ENCODE measurements at regions of chr15 and their contacts with region 1.

Region 1: GRCh38 chr15:75639709-75640482 is at the start of gene IMP3:
- DNase-seq: peak in 1 of 2 donors; percentile 96
- H3K4me3 ChIP-seq: peak within 1 kb of the TSS; percentile 83 to 94
- H3K27ac ChIP-seq: peak within 1 kb of the TSS; percentile 89
- H3K4me1 ChIP-seq: peaks cover 43% of the 10 kb centered on the region
- H3K27me3 ChIP-seq: no peaks in the 10 kb centered on the region
- CTCF ChIP-seq: no peak
- POLR2A ChIP-seq: peak; percentile 60 to 95
- total RNA-seq, gene IMP3: 109 TPM

Region 2: GRCh38 chr15:75347222-75347878 is 292.5 kb before region 1 on chr15:
- intact Hi-C with region 1: no loop called
- DNase-seq: no peak
- H3K4me3 ChIP-seq: peak overlapping the region; percentile 72 to 92
- H3K27ac ChIP-seq: peak overlapping the region; percentile 84
- H3K4me1 ChIP-seq: peaks cover 25% of the 10 kb centered on the region
- H3K27me3 ChIP-seq: no peaks in the 10 kb centered on the region
- CTCF ChIP-seq: peak in 1 of 3 experiments; percentile 18
- POLR2A ChIP-seq: no peak

Region 3: DNA sequence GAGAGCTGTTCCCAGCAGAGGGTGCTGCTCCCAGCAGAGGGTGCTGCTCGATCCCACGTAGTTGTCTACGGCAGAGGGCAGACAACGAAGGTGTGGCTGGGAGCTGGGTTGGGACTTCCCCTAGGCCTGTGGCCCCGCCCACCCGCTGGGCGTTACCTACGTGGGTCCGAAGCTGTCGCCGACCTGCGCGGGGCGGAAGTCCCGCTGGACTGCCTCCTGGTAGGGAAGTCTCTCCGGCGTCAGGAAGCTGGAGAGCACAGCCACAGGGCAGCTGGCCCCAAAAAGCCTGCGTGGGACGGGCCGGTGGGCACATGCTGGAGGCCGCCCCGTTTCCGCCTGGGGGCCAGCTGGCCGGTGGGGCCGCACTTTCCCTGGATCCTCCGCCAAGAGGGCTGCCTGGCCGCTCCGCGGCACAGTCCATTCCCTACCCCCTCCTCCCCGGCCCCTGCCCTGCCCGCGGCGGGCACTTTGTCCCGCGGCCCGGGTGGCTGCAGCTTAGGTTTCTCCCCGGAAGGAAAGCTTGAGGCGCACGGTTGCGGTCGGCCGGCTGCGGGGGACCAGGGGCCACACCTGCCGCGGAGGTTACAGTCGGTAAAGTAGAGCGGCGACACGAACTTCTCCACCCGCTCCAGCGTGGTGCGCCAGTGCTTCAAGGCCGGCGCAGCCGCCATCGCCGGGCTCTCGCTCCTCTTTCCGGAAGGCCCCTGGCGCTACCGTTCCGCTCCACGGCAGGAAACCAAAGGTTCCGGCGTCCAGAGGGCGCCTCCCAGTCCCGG is 271.8 kb before region 1 on chr15 and contains the start of gene MAN2C1:
- intact Hi-C with region 1: loop called (anchors 5 kb)
- DNase-seq: peak in 1 of 2 donors; percentile 95
- H3K4me3 ChIP-seq: peak within 1 kb of the TSS; percentile 68 to 81
- H3K27ac ChIP-seq: peak within 1 kb of the TSS; percentile 91
- H3K4me1 ChIP-seq: peaks cover 20% of the 10 kb centered on the region
- H3K27me3 ChIP-seq: no peaks in the 10 kb centered on the region
- CTCF ChIP-seq: peak in 1 of 3 experiments; percentile 60
- POLR2A ChIP-seq: peak in 1 of 2 donors; percentile 68
- total RNA-seq, gene MAN2C1: 198 TPM

Region 4: DNA sequence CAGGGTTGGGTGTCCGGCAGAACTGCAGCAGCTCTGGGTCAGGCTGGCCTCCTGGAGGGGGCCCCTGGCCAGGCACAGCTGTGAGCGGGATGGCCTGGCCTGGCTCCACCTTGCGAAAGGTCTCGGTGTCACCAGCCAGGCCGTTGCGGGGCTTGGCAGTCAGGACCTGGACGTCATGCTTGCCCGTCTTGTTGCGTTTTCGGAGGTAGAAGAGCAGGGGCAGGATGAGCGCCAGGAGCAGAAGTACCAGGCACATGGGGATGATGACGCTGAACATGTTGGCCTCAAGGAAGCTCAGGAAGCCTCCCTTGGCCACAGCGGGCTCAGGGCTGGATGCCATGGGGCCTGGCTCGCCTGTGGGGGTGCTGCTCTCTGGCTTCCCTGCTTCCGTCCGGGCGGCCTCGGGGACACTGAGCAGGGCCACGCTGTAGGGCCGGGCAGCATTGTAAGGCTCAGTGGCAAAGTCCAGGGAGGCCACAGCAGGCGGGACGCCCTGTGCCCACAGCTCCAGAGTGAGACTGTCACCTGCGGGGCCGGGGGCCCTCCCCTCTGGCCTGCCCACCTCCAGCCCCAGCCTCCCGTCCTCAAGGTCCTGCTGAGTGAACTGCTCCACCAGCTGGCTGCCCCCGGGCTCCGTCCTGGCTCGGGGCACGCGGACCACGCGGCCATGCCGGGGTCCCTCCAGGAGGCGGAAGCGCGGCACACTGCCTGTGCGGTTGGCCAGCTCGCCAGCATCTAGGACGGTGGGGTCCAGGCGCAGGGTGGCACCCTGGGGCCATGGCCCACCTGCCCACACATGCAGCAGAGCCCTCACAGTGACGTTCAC is 35.9 kb after region 1 on chr15:
- intact Hi-C with region 1: loop called (anchors 5 kb)
- DNase-seq: no peak
- H3K4me3 ChIP-seq: no peak overlapping the region
- H3K27ac ChIP-seq: peak overlapping the region; percentile 84
- H3K4me1 ChIP-seq: peaks cover 65% of the 10 kb centered on the region
- H3K27me3 ChIP-seq: no peaks in the 10 kb centered on the region
- CTCF ChIP-seq: no peak
- POLR2A ChIP-seq: no peak

Measured in vagina (tissue), 2 donors.